Heart right ventricle (tissue), 16 donors: ENCODE measurements at regions of chr2 and their contacts with region 1.

Region 1: GRCh38 chr2:159165048-159165447 is 121.5 kb downstream of the WDSUB1 start:
- DNase-seq: peak in 1 of 2 donors; percentile 39
- ATAC-seq: peak; percentile 44 to 85 (median 65)
- H3K4me3 ChIP-seq: no peak overlapping the region
- H3K27ac ChIP-seq: peak overlapping the region; percentile 43 to 88 (median 80)
- H3K4me1 ChIP-seq: peaks cover 6 to 53% (median 32%) of the 10 kb centered on the region in 9 donors
- H3K27me3 ChIP-seq: no peaks in the 10 kb centered on the region
- CTCF ChIP-seq: no peak

Region 2: DNA sequence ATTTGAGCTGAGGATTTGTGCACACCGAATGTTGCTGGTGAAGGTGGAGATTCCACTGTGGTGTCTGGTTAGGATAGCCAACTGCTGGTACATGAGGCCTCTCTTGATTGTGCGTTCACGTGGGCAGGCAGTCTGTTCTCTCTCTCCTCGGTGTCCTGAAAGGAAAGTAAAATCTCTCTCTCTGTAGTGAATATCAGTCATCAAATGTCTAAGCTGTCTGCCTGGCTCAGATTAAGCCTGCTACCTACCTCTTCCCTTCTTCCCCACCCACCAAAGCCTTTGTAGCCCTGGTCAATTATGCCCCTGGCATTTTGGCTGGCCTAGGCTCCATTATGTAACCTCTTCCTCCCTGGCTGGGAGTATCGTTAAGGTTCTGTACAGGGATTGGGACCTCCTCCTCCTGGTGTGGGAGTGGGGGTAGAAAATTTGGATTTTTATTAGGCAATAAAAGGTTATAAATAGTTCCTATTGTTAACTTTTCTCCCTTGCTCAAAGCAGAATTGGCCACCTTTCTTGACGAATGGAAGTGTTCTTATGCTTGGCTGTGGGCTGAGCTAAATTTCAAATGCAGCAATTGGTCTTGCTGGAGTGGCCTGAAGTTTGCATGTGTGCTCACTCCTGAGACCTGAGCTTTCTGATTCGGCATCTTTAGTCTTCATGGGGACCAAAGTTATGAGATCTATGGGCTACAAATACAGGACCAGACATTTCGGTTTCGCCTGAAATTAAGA is 27.4 kb before region 1 on chr2:
- intact Hi-C with region 1: loop called in 2 of 10 experiments (anchors 1 to 5 kb)
- DNase-seq: peak in 1 of 2 donors; percentile 44
- ATAC-seq: peak; percentile 8 to 53 (median 40)
- H3K4me3 ChIP-seq: peak overlapping the region in 6 of 10 donors; percentile 1 to 26 (median 16)
- H3K27ac ChIP-seq: peak overlapping the region; percentile 36 to 93 (median 84)
- H3K4me1 ChIP-seq: peaks cover 4 to 89% (median 64%) of the 10 kb centered on the region in 9 donors
- H3K27me3 ChIP-seq: no peaks in the 10 kb centered on the region
- CTCF ChIP-seq: no peak